Activated CD4-positive, alpha-beta T cell treated with anti-CD3 and anti-CD28 coated beads for 36 hours (primary cell): ENCODE measurements at regions of chr16 and their contacts with region 1.

Region 1: GRCh38 chr16:2340564-2341455 is at the start of gene ABCA3:
- DNase-seq: peak; percentile 97
- ATAC-seq: peak; percentile 92
- H3K4me3 Mint-ChIP-seq: peak within 1 kb of the TSS; percentile 82
- H3K27ac Mint-ChIP-seq: peak within 1 kb of the TSS; percentile 21
- H3K4me1 Mint-ChIP-seq: peaks cover 13% of the 10 kb centered on the region
- H3K27me3 Mint-ChIP-seq: peaks cover 7% of the 10 kb centered on the region
- total RNA-seq, gene ABCA3: 6.0 to 7.2 TPM

Region 2: GRCh38 chr16:2009789-2010510 is 330.9 kb before region 1 on chr16 and contains the start of gene ZNF598:
- CTCF ChIA-PET with region 1: no interaction called
- POLR2A ChIA-PET with region 1: no interaction called
- intact Hi-C with region 1: loop called in 1 of 2 experiments (anchors 10 kb)
- DNase-seq: peak; percentile 90
- ATAC-seq: peak; percentile 93
- H3K4me3 Mint-ChIP-seq: peak within 1 kb of the TSS; percentile 95
- H3K27ac Mint-ChIP-seq: peak within 1 kb of the TSS; percentile 90
- H3K4me1 Mint-ChIP-seq: peaks cover 35% of the 10 kb centered on the region
- H3K27me3 Mint-ChIP-seq: no peaks in the 10 kb centered on the region
- total RNA-seq, gene ZNF598: 64.6 to 69.8 TPM

Region 3: DNA sequence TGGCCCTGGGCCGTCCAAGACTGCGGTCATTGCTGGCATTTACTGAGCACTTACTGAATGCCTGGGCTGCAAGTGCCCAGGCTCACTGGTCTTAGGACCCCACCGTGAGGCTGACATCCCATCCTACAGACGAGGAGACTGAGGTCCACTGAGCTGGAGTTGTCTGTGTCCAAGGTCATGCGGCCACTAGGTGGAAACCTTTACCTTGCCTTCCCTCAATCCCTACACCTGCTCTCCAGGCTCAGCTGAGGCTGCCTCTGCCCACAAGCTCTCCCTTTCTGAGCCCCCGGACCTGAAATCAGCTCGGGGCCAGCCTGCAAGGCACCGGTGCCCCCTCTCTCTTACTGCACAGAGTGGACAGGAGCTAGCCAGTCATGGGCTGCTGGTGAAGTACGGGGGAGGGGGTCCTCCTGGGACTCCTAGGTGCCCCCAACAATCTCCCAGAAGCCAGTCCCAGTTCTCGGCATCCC is 145.9 kb before region 1 on chr16:
- CTCF ChIA-PET with region 1: no interaction called
- POLR2A ChIA-PET with region 1: no interaction called
- intact Hi-C with region 1: no loop called
- DNase-seq: peak; percentile 74
- ATAC-seq: peak; percentile 87
- H3K4me3 Mint-ChIP-seq: peak overlapping the region; percentile 26
- H3K27ac Mint-ChIP-seq: no peak overlapping the region
- H3K4me1 Mint-ChIP-seq: peaks cover 5% of the 10 kb centered on the region
- H3K27me3 Mint-ChIP-seq: peaks cover 23% of the 10 kb centered on the region

Region 4: GRCh38 chr16:2213817-2214720 is 126.7 kb before region 1 on chr16:
- CTCF ChIA-PET with region 1: no interaction called
- POLR2A ChIA-PET with region 1: no interaction called
- intact Hi-C with region 1: loop called in 1 of 2 experiments (anchors 2 kb)
- DNase-seq: peak; percentile 40
- ATAC-seq: no peak
- H3K4me3 Mint-ChIP-seq: peak overlapping the region; percentile 79
- H3K27ac Mint-ChIP-seq: peak overlapping the region; percentile 45
- H3K4me1 Mint-ChIP-seq: peaks cover 18% of the 10 kb centered on the region
- H3K27me3 Mint-ChIP-seq: no peaks in the 10 kb centered on the region

Region 5: DNA sequence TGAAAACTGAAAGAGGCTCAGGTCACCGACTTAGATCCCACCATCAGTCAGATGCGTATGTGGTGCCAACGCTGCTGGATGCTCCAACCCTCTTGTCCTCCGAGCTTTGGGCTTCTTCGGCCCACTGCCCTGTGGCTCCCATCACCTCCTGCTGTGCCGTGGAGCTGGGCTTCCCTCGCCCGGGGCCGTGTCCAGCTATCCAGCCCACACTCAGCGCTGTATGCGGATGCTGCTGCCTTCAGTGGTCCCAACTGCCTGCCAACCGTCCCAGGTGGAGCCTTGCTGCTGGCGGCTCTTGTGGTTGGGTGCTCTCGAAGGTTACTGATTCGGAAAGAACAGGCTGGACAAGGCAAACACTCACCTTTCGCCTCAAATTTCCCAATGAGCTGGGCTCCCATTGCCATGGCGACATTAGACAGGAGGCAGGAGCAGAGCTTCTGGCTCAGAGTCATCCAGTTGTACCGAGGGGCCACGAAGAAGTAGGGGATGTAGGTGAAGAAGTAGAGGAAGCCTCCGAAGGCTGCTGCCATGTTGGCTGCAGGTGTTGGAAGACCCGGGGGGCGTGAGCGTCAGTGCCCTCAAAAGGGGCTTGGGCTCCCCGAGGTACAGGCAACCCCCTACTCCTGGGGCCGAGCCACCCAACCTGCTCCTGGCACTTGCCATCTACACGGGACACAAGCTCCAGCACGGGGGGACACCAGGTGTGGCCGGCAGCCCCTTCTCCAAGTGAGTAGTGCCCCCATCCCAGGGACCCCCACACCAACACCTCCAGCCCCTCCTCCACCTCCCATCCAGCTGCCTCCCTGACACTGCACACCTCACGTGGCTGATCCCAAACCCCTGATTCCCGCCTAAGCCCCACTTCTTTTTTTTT is 32.5 kb before region 1 on chr16:
- CTCF ChIA-PET with region 1: no interaction called
- POLR2A ChIA-PET with region 1: no interaction called
- intact Hi-C with region 1: no loop called
- DNase-seq: no peak
- ATAC-seq: no peak
- H3K4me3 Mint-ChIP-seq: no peak overlapping the region
- H3K27ac Mint-ChIP-seq: no peak overlapping the region
- H3K4me1 Mint-ChIP-seq: no peaks in the 10 kb centered on the region
- H3K27me3 Mint-ChIP-seq: no peaks in the 10 kb centered on the region

Region 6: GRCh38 chr16:2459647-2460390 is 119.0 kb after region 1 on chr16 and contains the start of gene TEDC2:
- CTCF ChIA-PET with region 1: no interaction called
- POLR2A ChIA-PET with region 1: interaction called, 4 read pairs
- intact Hi-C with region 1: loop called in 1 of 2 experiments (anchors 1 kb)
- DNase-seq: peak; percentile 99
- ATAC-seq: peak; percentile 98
- H3K4me3 Mint-ChIP-seq: peak within 1 kb of the TSS; percentile 73
- H3K27ac Mint-ChIP-seq: peak within 1 kb of the TSS; percentile 67
- H3K4me1 Mint-ChIP-seq: peaks cover 6% of the 10 kb centered on the region
- H3K27me3 Mint-ChIP-seq: no peaks in the 10 kb centered on the region
- total RNA-seq, gene TEDC2: 21.0 to 23.1 TPM

Region 7: GRCh38 chr16:2500918-2501750 is 160.3 kb after region 1 on chr16:
- CTCF ChIA-PET with region 1: no interaction called
- POLR2A ChIA-PET with region 1: no interaction called
- intact Hi-C with region 1: loop called (anchors 1 to 2 kb)
- DNase-seq: peak; percentile 89
- ATAC-seq: peak; percentile 98
- H3K4me3 Mint-ChIP-seq: no peak overlapping the region
- H3K27ac Mint-ChIP-seq: no peak overlapping the region
- H3K4me1 Mint-ChIP-seq: no peaks in the 10 kb centered on the region
- H3K27me3 Mint-ChIP-seq: no peaks in the 10 kb centered on the region